MCF 10A (cell line): ENCODE measurements at regions of chr2 and their contacts with region 1.

Region 1: GRCh38 chr2:207710814-207711740 is at the start of gene CCNYL1:
- DNase-seq: peak; percentile 98
- H3K4me3 Mint-ChIP-seq: peak within 1 kb of the TSS; percentile 99
- H3K27ac Mint-ChIP-seq: peak within 1 kb of the TSS; percentile 96
- H3K4me1 Mint-ChIP-seq: peaks cover 17% of the 10 kb centered on the region
- H3K27me3 Mint-ChIP-seq: no peaks in the 10 kb centered on the region
- CTCF ChIP-seq: no peak
- total RNA-seq, gene CCNYL1: 19.7 and 23.3 TPM in 2 replicates

Region 2: GRCh38 chr2:207558106-207558505 is 153.0 kb before region 1 on chr2:
- CTCF ChIA-PET with region 1: no interaction called
- POLR2A ChIA-PET with region 1: interaction called, 3 read pairs
- intact Hi-C with region 1: loop called (anchors 5 kb)
- DNase-seq: peak; percentile 68
- H3K4me3 Mint-ChIP-seq: no peak overlapping the region
- H3K27ac Mint-ChIP-seq: peak overlapping the region; percentile 52
- H3K4me1 Mint-ChIP-seq: peaks cover 29% of the 10 kb centered on the region
- H3K27me3 Mint-ChIP-seq: no peaks in the 10 kb centered on the region
- CTCF ChIP-seq: no peak

Region 3: DNA sequence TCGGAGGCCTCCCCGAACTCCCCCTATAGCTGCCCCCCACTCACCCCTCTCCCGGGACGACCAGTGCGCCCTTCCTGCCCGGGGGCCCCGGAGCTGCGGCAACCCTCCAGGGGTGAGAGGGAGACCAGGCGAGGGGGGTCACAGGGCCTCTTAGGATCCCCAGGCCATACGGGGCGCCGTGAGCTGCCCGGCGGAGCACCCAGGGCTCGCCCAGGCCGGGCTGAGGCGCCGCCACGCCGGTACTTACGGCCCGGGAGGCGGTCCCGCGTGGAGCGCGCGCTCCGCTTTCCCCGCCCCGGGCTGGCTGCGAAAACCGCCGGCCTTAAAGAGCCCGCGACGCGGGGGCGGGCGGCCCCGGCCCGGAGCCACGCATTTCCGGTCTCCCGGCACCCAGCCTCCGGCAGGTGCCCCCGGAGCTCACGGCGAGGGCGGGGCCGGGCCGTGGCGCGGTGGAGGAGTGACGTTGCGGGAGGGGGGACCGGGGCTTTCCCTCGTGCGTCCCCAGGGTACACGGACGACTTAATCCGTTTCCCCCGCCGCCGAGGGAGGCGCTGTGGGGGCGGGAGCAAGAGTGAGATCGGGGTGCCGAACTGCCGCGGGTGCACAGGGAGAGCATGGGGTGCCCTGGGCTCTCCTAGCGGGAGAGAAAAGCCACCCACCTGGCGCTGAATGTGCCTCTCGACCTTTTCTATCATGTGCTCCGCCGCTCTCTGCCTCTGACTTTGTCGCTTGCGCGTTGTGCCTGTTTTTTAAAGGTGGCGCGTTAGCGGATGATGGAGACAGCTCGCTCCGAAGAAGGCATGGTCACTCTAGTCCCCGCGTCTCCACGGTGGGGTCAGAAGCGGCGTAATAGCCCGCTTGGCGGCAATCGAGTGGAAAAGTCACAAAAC is 85.8 kb before region 1 on chr2 and contains the start of gene METTL21A:
- CTCF ChIA-PET with region 1: interaction called, 11 read pairs
- POLR2A ChIA-PET with region 1: interaction called, 50 read pairs
- intact Hi-C with region 1: loop called (anchors 2 kb)
- DNase-seq: peak; percentile 85
- H3K4me3 Mint-ChIP-seq: peak within 1 kb of the TSS; percentile 86
- H3K27ac Mint-ChIP-seq: peak within 1 kb of the TSS; percentile 74
- H3K4me1 Mint-ChIP-seq: peaks cover 25% of the 10 kb centered on the region
- H3K27me3 Mint-ChIP-seq: no peaks in the 10 kb centered on the region
- CTCF ChIP-seq: peak; percentile 25
- total RNA-seq, gene METTL21A: 8.4 and 13.5 TPM in 2 replicates

Region 4: GRCh38 chr2:207725873-207726578 is 14.9 kb after region 1 on chr2:
- CTCF ChIA-PET with region 1: interaction called, 6 read pairs
- POLR2A ChIA-PET with region 1: interaction called, 57 read pairs
- intact Hi-C with region 1: no loop called
- DNase-seq: peak; percentile 31
- H3K4me3 Mint-ChIP-seq: no peak overlapping the region
- H3K27ac Mint-ChIP-seq: peak overlapping the region; percentile 28
- H3K4me1 Mint-ChIP-seq: peaks cover 25% of the 10 kb centered on the region
- H3K27me3 Mint-ChIP-seq: no peaks in the 10 kb centered on the region
- CTCF ChIP-seq: no peak

Region 5: GRCh38 chr2:207914716-207915115 is 203.6 kb after region 1 on chr2:
- CTCF ChIA-PET with region 1: no interaction called
- POLR2A ChIA-PET with region 1: no interaction called
- intact Hi-C with region 1: no loop called
- DNase-seq: peak; percentile 11
- H3K4me3 Mint-ChIP-seq: no peak overlapping the region
- H3K27ac Mint-ChIP-seq: no peak overlapping the region
- H3K4me1 Mint-ChIP-seq: no peaks in the 10 kb centered on the region
- H3K27me3 Mint-ChIP-seq: no peaks in the 10 kb centered on the region
- CTCF ChIP-seq: no peak

Region 6: GRCh38 chr2:208265801-208266552 is 554.9 kb after region 1 on chr2 and contains the start of gene PIKFYVE:
- CTCF ChIA-PET with region 1: no interaction called
- POLR2A ChIA-PET with region 1: interaction called, 10 read pairs
- intact Hi-C with region 1: no loop called
- DNase-seq: peak; percentile 98
- H3K4me3 Mint-ChIP-seq: peak within 1 kb of the TSS; percentile 90
- H3K27ac Mint-ChIP-seq: peak within 1 kb of the TSS; percentile 96
- H3K4me1 Mint-ChIP-seq: peaks cover 27% of the 10 kb centered on the region
- H3K27me3 Mint-ChIP-seq: no peaks in the 10 kb centered on the region
- CTCF ChIP-seq: no peak
- total RNA-seq, gene PIKFYVE: 22.8 and 27.2 TPM in 2 replicates